ENCODE measurements at regions of chr17 and their contacts with region 1.

Region 1: GRCh38 chr17:80426681-80427326 is 11.8 kb downstream of the ENDOV start:
- DNase-seq: peak; percentile 72 to 91 (median 86)
- ATAC-seq: peak; percentile 99
- H3K4me3 ChIP-seq: no peak overlapping the region
- H3K4me3 Mint-ChIP-seq: peak overlapping the region in 1 of 10 donors; percentile 5
- H3K27ac ChIP-seq: no peak overlapping the region
- H3K27ac Mint-ChIP-seq: peak overlapping the region in 1 of 9 donors; percentile 11
- H3K4me1 ChIP-seq: peaks cover 8 to 11% of the 10 kb centered on the region in 2 donors
- H3K4me1 Mint-ChIP-seq: peaks cover 4 to 16% (median 5%) of the 10 kb centered on the region in 7 donors
- H3K27me3 ChIP-seq: no peaks in the 10 kb centered on the region
- H3K27me3 Mint-ChIP-seq: no peaks in the 10 kb centered on the region

Region 2: DNA sequence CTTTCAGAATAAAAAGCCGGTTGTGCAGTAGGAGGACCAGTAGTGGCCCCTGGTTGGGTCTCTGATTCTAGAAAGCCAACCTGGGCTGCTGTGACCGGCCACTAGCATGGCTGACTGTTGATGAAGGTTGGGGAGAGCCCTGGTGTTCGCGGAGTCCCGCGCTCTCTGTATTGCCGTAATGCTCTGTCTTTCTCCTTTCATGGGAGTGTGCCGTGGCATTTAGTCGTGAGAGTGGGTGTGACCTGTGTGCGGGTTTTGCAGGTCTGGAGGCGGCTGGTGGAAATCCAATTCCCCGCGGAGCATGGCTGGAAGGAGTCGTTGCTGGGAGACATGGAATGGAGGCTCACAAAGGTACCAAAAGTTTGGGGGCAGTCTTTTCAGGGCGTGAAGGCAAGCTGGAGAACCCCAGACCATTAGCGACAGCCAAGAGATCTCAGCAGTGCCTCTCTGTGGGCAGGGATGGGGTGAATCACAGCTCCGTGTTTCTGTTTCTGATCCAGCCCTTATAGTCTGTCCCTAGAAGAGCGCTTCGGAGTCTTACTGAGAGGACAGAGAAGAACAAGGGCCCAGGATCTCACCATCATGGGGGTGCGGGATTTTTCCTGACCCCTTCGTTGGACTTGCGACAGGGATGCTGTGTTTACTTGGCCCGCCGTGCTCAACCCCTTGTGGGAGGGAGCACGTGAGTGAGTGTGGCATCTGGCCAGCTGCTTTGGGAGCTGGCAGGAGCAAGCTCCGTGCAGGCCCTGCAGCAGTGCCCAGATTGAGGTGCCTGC is 109.7 kb before region 1 on chr17:
- CTCF ChIA-PET with region 1: no interaction called
- POLR2A ChIA-PET with region 1: no interaction called
- intact Hi-C with region 1: no loop called
- DNase-seq: no peak
- ATAC-seq: no peak
- H3K4me3 ChIP-seq: no peak overlapping the region
- H3K4me3 Mint-ChIP-seq: no peak overlapping the region
- H3K27ac ChIP-seq: no peak overlapping the region
- H3K27ac Mint-ChIP-seq: peak overlapping the region in 2 of 9 donors; percentile 21 to 53
- H3K4me1 ChIP-seq: no peaks in the 10 kb centered on the region
- H3K4me1 Mint-ChIP-seq: peaks cover 0 to 17% (median 0%) of the 10 kb centered on the region in 7 donors
- H3K27me3 ChIP-seq: no peaks in the 10 kb centered on the region
- H3K27me3 Mint-ChIP-seq: no peaks in the 10 kb centered on the region

Region 3: GRCh38 chr17:80544655-80545498 is 118.1 kb after region 1 on chr17 and contains the start of gene RPTOR:
- CTCF ChIA-PET with region 1: no interaction called
- POLR2A ChIA-PET with region 1: no interaction called
- intact Hi-C with region 1: loop called in 1 of 2 experiments (anchors 10 kb)
- DNase-seq: peak; percentile 71 to 91 (median 86)
- ATAC-seq: peak; percentile 100
- H3K4me3 ChIP-seq: peak within 1 kb of the TSS; percentile 97
- H3K4me3 Mint-ChIP-seq: peak within 1 kb of the TSS; percentile 88 to 97 (median 94)
- H3K27ac ChIP-seq: peak within 1 kb of the TSS; percentile 79
- H3K27ac Mint-ChIP-seq: peak within 1 kb of the TSS; percentile 85 to 97 (median 93)
- H3K4me1 ChIP-seq: peaks cover 13 to 15% of the 10 kb centered on the region in 2 donors
- H3K4me1 Mint-ChIP-seq: peaks cover 17 to 39% (median 32%) of the 10 kb centered on the region in 7 donors
- H3K27me3 ChIP-seq: no peaks in the 10 kb centered on the region
- H3K27me3 Mint-ChIP-seq: peaks cover 0 to 4% (median 3%) of the 10 kb centered on the region in 5 donors
- total RNA-seq, gene RPTOR: 53.7 to 89.8 (median 69.5) TPM

Region 4: GRCh38 chr17:80761110-80761871 is 334.5 kb after region 1 on chr17:
- CTCF ChIA-PET with region 1: no interaction called
- POLR2A ChIA-PET with region 1: no interaction called
- intact Hi-C with region 1: no loop called
- DNase-seq: peak in 5 of 9 donors; percentile 34 to 73 (median 41)
- ATAC-seq: peak; percentile 45
- H3K4me3 ChIP-seq: peak overlapping the region; percentile 28
- H3K4me3 Mint-ChIP-seq: peak overlapping the region; percentile 60 to 84 (median 80)
- H3K27ac ChIP-seq: peak overlapping the region; percentile 81
- H3K27ac Mint-ChIP-seq: peak overlapping the region; percentile 87 to 98 (median 94)
- H3K4me1 ChIP-seq: peaks cover 34 to 68% of the 10 kb centered on the region in 2 donors
- H3K4me1 Mint-ChIP-seq: peaks cover 59 to 94% (median 84%) of the 10 kb centered on the region in 7 donors
- H3K27me3 ChIP-seq: no peaks in the 10 kb centered on the region
- H3K27me3 Mint-ChIP-seq: no peaks in the 10 kb centered on the region

Region 5: DNA sequence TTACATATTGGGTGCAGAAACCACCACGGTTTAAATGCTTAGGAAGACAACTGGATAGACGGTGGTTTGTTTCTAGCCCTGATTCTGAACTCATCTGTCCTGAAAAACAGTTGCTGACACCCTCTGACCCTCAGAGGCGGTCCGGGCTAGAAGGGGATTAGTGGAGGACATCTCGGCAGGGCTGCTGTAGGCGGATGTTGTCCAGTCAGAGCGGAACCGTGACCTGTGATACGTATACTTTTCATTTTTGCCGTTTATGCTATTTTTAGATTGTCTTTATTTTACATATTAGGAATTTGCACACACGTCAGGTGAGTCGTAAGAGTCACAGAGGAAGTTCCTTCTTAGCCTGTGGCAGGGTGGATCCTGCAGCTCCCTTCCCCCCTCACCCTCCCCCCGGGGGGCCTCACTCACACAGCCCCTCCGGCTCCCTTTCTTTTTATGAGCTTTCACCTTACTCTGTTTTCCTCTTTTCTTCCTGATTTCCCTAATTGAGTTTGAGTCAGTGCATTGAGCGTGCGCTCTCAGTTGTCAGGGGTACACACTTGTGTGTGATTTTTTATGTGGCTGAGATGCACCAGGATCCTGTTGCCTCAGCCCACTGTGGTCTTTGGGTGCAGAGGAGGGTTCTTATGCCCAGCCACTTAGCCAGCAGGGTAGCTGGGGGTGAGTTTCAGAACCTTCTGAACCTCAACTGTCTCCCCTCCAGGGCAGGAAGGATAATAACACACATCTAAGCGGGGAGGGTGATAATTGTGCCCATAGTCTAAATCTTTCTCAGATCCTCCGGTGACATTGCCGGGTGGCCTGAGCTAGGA is 353.8 kb after region 1 on chr17:
- CTCF ChIA-PET with region 1: interaction called, 4 read pairs
- POLR2A ChIA-PET with region 1: no interaction called
- intact Hi-C with region 1: loop called in 1 of 2 experiments (anchors 5 kb)
- DNase-seq: peak in 3 of 9 donors; percentile 29 to 57 (median 43)
- ATAC-seq: peak; percentile 40
- H3K4me3 ChIP-seq: peak overlapping the region; percentile 45
- H3K4me3 Mint-ChIP-seq: peak overlapping the region; percentile 62 to 96 (median 82)
- H3K27ac ChIP-seq: peak overlapping the region; percentile 70
- H3K27ac Mint-ChIP-seq: peak overlapping the region; percentile 87 to 99 (median 94)
- H3K4me1 ChIP-seq: peaks cover 38 to 57% of the 10 kb centered on the region in 2 donors
- H3K4me1 Mint-ChIP-seq: peaks cover 30 to 90% (median 77%) of the 10 kb centered on the region in 7 donors
- H3K27me3 ChIP-seq: no peaks in the 10 kb centered on the region
- H3K27me3 Mint-ChIP-seq: no peaks in the 10 kb centered on the region

Region 6: DNA sequence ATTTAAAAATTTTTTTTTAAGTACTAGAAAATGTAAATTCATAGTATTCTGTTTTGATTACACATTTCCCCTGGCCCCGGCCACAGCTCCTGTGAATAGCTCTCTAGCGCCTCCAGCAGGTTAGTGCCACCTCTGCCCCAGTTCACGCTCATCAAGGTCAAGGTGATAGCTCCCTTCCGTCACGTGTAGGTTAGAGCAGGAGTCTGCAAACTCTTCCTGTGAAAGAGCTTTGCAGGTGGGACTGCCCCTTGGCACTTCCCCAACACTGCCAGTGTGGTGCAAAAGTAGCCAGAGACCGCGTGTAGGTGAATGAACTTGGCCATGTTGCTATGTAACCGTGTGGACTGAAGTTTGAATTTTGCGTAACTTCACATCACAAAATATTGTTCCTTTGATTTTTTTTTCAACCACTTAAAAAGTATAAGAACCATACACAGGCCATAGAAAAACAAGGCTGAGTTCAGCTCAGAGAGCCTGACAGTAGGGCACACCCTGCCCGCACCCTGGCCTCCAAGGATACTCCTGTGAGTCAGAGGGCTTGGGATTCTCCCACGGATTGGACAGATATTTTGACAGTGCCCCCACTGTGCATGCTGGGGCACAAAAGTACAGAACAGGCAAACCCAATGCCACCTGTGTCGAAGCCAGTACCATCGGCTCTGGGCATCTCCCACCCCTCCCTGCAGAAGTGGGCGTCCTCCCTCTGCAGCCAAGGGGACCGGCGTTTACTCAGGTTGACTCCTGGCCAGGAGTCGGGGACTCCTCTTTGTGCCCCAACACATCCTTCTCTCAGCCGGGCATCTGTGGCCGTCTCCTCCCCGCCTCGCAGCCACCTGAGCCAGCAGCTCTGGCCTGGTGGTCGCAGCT is 472.8 kb after region 1 on chr17:
- CTCF ChIA-PET with region 1: interaction called, 20 read pairs
- POLR2A ChIA-PET with region 1: interaction called, 4 read pairs
- intact Hi-C with region 1: loop called (anchors 1 kb)
- DNase-seq: peak; percentile 54 to 81 (median 76)
- ATAC-seq: peak; percentile 91
- H3K4me3 ChIP-seq: no peak overlapping the region
- H3K4me3 Mint-ChIP-seq: peak overlapping the region in 1 of 10 donors; percentile 25
- H3K27ac ChIP-seq: no peak overlapping the region
- H3K27ac Mint-ChIP-seq: peak overlapping the region in 4 of 9 donors; percentile 7 to 38 (median 26)
- H3K4me1 ChIP-seq: peaks cover 4 to 6% of the 10 kb centered on the region in 2 donors
- H3K4me1 Mint-ChIP-seq: peaks cover 5 to 63% (median 10%) of the 10 kb centered on the region in 7 donors
- H3K27me3 ChIP-seq: no peaks in the 10 kb centered on the region
- H3K27me3 Mint-ChIP-seq: no peaks in the 10 kb centered on the region

Region 7: DNA sequence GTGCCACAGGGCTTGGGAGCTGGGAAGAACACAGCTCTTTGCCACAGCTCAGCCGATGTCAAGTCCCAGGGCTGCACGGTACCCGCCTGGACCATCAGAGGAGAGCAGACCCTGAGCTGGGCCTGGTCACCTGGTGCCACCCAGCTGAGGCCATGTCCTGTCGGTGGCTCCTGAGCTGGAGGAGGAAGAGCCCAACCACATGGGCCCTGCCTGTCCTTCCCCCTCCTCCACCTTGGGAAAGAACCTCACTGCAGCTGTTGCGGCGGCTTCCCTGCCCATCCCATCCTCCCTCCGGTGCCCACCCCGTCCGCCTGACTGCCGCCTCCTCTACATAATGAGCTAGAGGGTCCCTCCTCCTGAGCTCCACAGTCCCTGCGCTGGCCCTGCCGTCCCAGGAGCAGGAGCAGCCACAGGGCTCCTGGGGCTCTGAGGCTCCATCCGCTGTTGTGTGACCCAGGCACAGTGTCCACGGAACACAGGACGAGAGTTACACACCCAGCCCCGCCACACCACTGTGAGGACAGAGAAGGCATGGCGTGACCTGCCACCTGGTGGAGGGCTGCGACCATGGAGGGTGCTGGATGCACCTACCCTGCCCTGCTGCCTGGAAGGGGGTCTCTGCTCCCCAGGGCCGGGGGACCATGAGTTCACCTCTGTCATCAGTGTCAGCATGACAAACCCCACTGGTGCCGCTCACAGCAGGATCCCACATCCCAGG is 543.4 kb after region 1 on chr17:
- CTCF ChIA-PET with region 1: interaction called, 26 read pairs
- POLR2A ChIA-PET with region 1: interaction called, 3 read pairs
- intact Hi-C with region 1: no loop called
- DNase-seq: peak in 8 of 9 donors; percentile 23 to 49 (median 41)
- ATAC-seq: peak; percentile 80
- H3K4me3 ChIP-seq: no peak overlapping the region
- H3K4me3 Mint-ChIP-seq: peak overlapping the region in 5 of 10 donors; percentile 11 to 56 (median 24)
- H3K27ac ChIP-seq: no peak overlapping the region
- H3K27ac Mint-ChIP-seq: peak overlapping the region in 6 of 9 donors; percentile 37 to 86 (median 50)
- H3K4me1 ChIP-seq: peaks cover 0 to 20% of the 10 kb centered on the region in 2 donors
- H3K4me1 Mint-ChIP-seq: peaks cover 5 to 14% (median 6%) of the 10 kb centered on the region in 7 donors
- H3K27me3 ChIP-seq: no peaks in the 10 kb centered on the region
- H3K27me3 Mint-ChIP-seq: peaks cover 0 to 9% (median 0%) of the 10 kb centered on the region in 5 donors

Region 8: DNA sequence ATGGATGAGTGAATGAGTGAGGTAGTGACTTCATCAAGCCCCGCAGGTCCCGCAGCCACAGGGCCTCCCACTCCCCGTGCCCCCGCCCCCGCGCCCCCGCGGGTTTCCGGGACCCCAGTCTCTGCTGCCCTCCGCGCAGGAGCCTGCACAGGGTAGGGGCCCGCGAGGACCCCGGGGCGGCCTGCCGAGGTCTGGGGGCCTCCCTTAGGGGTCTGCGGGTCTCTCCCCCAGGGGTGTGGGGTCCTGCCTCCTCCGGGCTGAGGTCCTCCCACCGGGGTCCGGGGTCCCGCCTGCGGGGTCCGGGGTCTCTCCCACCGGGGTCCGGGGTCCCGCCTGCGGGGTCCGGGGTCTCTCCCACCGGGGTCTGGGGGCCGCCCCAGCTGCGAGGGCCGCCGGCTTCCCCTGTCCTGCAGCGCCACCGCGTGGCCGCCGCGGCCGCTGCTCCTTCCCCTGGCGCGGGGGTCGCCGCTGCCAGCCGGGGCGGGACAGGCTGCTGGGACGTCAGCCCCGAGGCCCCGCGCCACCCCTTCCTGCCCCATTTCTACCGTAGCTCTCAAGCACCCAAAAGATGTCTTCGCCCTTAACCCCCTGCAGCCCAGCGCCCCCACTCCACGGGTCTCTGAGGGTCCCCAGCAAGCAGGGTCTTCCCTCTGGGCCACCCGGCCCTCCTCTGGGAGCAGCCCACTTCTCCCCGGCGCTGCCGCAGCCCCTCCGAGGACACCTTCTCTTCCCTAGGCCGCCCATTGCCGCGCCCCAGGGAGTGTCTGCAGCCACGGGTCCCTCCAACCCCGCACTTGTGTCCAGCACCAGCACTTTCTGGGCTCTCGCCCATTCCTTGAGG is 554.5 kb after region 1 on chr17:
- CTCF ChIA-PET with region 1: interaction called, 10 read pairs
- POLR2A ChIA-PET with region 1: no interaction called
- intact Hi-C with region 1: loop called in 1 of 2 experiments (anchors 1 kb)
- DNase-seq: peak in 7 of 9 donors; percentile 28 to 64 (median 50)
- ATAC-seq: peak; percentile 64
- H3K4me3 ChIP-seq: no peak overlapping the region
- H3K4me3 Mint-ChIP-seq: peak overlapping the region in 7 of 10 donors; percentile 22 to 75 (median 61)
- H3K27ac ChIP-seq: no peak overlapping the region
- H3K27ac Mint-ChIP-seq: peak overlapping the region in 2 of 9 donors; percentile 33 to 66
- H3K4me1 ChIP-seq: no peaks in the 10 kb centered on the region
- H3K4me1 Mint-ChIP-seq: peaks cover 8 to 12% (median 10%) of the 10 kb centered on the region in 7 donors
- H3K27me3 ChIP-seq: no peaks in the 10 kb centered on the region
- H3K27me3 Mint-ChIP-seq: peaks cover 8 to 22% (median 10%) of the 10 kb centered on the region in 5 donors

Region 9: DNA sequence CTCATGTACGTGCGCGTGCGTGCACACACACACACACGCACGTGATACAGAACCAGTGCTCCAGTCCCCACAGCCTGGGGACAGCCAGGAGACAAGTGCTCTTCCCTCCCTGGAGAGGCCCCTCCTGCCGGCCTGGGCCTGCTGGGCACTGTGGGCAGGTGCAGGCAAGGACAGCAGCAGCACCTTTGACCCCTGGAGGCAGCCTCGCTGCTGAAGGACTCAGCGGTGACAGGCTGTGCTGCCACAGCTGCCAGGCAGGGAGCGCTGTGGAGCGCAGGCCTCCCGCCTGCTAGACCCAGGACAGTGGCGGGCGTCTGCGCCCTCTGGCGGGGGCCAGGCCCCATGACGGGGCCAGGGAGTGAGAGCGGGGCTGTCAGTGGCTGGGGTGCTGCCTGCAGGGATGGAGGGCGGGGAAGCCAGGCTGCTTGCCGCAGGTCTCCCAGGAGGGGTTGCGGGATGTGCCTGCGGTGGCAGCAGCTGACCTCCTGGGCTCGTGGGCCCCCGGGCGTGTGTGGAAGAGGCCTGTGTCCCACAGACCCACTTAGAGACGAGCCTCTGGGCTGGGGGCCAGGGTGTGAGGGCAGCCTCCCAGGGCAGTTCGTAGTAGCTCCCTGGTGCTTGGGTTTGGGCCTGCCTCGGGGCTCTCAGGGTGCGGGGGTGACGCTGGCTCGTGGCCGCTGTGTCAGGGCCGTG is 675.0 kb after region 1 on chr17:
- CTCF ChIA-PET with region 1: interaction called, 3 read pairs
- POLR2A ChIA-PET with region 1: no interaction called
- intact Hi-C with region 1: loop called (anchors 1 kb)
- DNase-seq: peak; percentile 81 to 93 (median 90)
- ATAC-seq: peak; percentile 100
- H3K4me3 ChIP-seq: no peak overlapping the region
- H3K4me3 Mint-ChIP-seq: no peak overlapping the region
- H3K27ac ChIP-seq: no peak overlapping the region
- H3K27ac Mint-ChIP-seq: no peak overlapping the region
- H3K4me1 ChIP-seq: peaks cover 10 to 20% of the 10 kb centered on the region in 2 donors
- H3K4me1 Mint-ChIP-seq: peaks cover 0 to 3% (median under 1%) of the 10 kb centered on the region in 7 donors
- H3K27me3 ChIP-seq: no peaks in the 10 kb centered on the region
- H3K27me3 Mint-ChIP-seq: no peaks in the 10 kb centered on the region

Measured in naive thymus-derived CD4-positive, alpha-beta T cell (primary cell).